ENCODE measurements at regions of chr10 and their contacts with region 1.

Region 1: DNA sequence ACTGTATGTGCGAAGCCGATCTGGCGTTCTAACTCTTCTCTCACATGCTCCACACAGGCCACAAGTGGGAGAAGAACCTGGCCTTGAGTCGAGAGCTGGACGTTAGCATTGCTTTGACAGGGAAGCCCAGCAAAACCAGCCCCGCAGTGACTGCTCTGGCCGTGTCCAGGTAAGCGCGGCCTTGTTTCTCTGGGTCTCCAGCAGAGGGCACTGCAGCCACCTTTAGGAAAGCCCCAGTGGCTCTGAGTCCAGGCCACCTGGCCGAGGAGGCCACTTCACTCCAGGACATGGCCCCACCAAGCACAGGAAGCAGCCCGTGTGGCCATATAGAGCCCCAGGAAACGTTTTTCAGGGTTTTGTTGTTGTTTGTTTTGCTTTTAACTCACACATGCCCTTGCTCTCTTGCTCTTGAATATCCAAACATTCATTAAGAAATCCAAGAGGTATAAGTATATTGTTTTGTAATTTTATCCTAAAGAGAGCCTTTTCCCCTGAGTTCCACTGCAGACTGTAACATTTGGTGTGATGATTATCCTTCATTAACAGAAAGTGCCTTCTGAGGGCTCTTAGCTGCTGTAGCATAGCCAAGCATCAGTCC is 41.8 kb upstream of the LRRC18 start:
- DNase-seq: peak; percentile 69
- ATAC-seq: peak; percentile 80
- H3K4me3 Mint-ChIP-seq: no peak overlapping the region
- H3K27ac Mint-ChIP-seq: no peak overlapping the region
- H3K4me1 Mint-ChIP-seq: no peaks in the 10 kb centered on the region
- H3K27me3 Mint-ChIP-seq: no peaks in the 10 kb centered on the region

Region 2: DNA sequence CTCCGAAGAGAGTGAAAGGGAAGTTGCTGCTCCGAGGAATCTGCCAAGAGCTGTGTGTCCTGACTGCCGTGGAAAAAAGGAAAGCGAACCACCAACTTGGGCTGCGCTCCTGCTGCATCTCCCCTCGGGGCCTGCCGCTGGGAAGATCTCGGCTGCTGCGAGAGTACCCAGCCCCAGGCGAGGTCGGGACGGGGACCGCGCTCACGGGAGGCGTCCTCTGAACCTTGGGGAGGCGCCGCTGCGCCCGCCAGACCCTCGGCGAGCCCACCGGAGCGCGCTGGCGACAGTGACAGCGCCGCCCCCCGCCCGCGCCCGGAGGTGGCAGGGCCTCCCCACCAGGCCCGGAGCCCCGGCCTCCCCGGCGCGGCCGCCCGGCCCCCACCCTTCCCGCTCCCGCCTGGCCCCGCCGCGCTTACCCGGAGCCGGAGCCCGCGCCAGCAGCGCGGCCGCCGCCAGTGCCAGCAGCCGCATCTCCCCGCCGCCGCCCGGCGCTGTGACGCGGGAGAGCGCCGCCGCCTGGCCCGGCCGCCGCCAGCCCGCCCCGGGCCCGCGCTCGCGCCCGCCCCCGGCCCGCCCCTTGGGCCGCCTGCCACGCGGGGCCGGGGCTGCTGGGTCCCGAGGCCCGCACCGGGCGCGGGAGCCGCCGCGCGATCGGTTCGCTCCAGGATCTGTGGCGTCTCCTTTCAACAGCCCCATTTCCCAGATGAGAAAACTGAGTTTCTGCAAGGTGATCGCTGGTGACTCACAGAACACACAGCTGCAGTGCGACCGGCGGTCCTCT is 133.8 kb after region 1 on chr10 and contains the start of gene VSTM4:
- CTCF ChIA-PET with region 1: no interaction called
- POLR2A ChIA-PET with region 1: no interaction called
- intact Hi-C with region 1: loop called in 1 of 2 experiments (anchors 5 kb)
- DNase-seq: peak; percentile 33
- ATAC-seq: peak; percentile 51
- H3K4me3 Mint-ChIP-seq: peak within 1 kb of the TSS; percentile 43
- H3K27ac Mint-ChIP-seq: peak within 1 kb of the TSS; percentile 51
- H3K4me1 Mint-ChIP-seq: peaks cover 2% of the 10 kb centered on the region
- H3K27me3 Mint-ChIP-seq: peaks cover 12% of the 10 kb centered on the region
- total RNA-seq, gene VSTM4: 0.07 to 0.11 TPM

Region 3: GRCh38 chr10:49164559-49165188 is 183.3 kb after region 1 on chr10:
- CTCF ChIA-PET with region 1: interaction called, 6 read pairs
- POLR2A ChIA-PET with region 1: no interaction called
- intact Hi-C with region 1: loop called (anchors 1 to 2 kb)
- DNase-seq: peak; percentile 73
- ATAC-seq: peak; percentile 93
- H3K4me3 Mint-ChIP-seq: no peak overlapping the region
- H3K27ac Mint-ChIP-seq: peak overlapping the region; percentile 10
- H3K4me1 Mint-ChIP-seq: peaks cover 13% of the 10 kb centered on the region
- H3K27me3 Mint-ChIP-seq: no peaks in the 10 kb centered on the region

Region 4: GRCh38 chr10:49280001-49280408 is 298.6 kb after region 1 on chr10:
- CTCF ChIA-PET with region 1: no interaction called
- POLR2A ChIA-PET with region 1: no interaction called
- intact Hi-C with region 1: loop called in 1 of 2 experiments (anchors 10 kb)
- DNase-seq: peak; percentile 26
- ATAC-seq: peak; percentile 78
- H3K4me3 Mint-ChIP-seq: no peak overlapping the region
- H3K27ac Mint-ChIP-seq: no peak overlapping the region
- H3K4me1 Mint-ChIP-seq: no peaks in the 10 kb centered on the region
- H3K27me3 Mint-ChIP-seq: peaks cover 3% of the 10 kb centered on the region

Region 5: GRCh38 chr10:49512121-49512809 is 530.9 kb after region 1 on chr10:
- CTCF ChIA-PET with region 1: interaction called, 3 read pairs
- POLR2A ChIA-PET with region 1: no interaction called
- intact Hi-C with region 1: loop called (anchors 2 to 5 kb)
- DNase-seq: peak; percentile 24
- ATAC-seq: peak; percentile 61
- H3K4me3 Mint-ChIP-seq: no peak overlapping the region
- H3K27ac Mint-ChIP-seq: no peak overlapping the region
- H3K4me1 Mint-ChIP-seq: peaks cover 21% of the 10 kb centered on the region
- H3K27me3 Mint-ChIP-seq: peaks cover 4% of the 10 kb centered on the region

Region 6: GRCh38 chr10:50325449-50326171 is 1344.2 kb after region 1 on chr10:
- CTCF ChIA-PET with region 1: no interaction called
- POLR2A ChIA-PET with region 1: no interaction called
- intact Hi-C with region 1: no loop called
- DNase-seq: peak; percentile 19
- ATAC-seq: peak; percentile 88
- H3K4me3 Mint-ChIP-seq: no peak overlapping the region
- H3K27ac Mint-ChIP-seq: no peak overlapping the region
- H3K4me1 Mint-ChIP-seq: peaks cover 6% of the 10 kb centered on the region
- H3K27me3 Mint-ChIP-seq: no peaks in the 10 kb centered on the region

Measured in activated CD4-positive, alpha-beta T cell treated with anti-CD3 and anti-CD28 coated beads for 36 hours (primary cell).